K562 (cell line): ENCODE measurements at regions of chr6 and their contacts with region 1.

Region 1: DNA sequence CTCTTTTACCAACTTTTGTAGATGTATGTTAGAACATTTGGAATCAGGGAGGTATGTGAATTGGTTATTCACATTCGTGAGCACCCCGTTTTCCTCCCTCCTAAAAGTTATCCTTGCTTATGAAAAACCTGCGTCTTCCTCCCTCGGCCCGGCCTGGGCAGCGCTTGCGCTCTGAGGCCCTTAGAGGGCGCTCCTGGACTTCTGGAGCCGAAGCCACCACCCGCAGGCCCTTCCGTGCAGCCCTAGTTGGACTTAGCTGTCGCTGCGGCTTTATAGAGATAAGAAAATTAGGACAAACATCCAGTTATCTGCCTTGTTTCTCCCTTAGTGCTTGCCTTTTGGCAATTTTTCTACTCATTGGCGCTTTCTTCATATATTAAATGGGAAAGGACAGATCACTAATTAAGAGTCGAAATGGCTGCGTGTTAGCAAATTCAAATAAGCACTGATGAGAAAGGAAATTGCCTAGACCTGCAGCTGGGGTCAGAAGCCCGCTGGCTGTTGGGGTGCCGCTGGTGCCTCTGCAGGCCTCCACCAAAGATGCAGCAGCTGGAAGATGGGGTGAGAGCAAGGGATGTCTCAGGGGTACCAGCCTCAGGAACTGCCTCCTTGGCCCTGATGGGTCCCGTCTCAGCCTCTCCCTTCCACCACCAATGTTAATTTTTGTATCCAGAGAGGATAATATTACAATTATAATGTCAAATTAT is 5.2 kb downstream of the FNDC1 start:
- DNase-seq: peak; percentile 70 to 82 (median 78)
- ATAC-seq: peak; percentile 100
- H3K4me3 ChIP-seq: no peak overlapping the region
- H3K27ac ChIP-seq: no peak overlapping the region
- H3K4me1 ChIP-seq: peaks cover 0 to 7% of the 10 kb centered on the region in 2 experiments; a peak in 1 of 5 replicates
- H3K27me3 ChIP-seq: peaks cover 29 to 54% of the 10 kb centered on the region in 2 experiments
- CTCF ChIP-seq: peak; percentile 95 to 99 (median 98)
- EP300 ChIP-seq: 0 out of 2 replicates have a peak, but pooled peaks have one; percentile 20
- POLR2A ChIP-seq: no peak
- RAD21 ChIP-seq: peak; percentile 91 to 96

Region 2: GRCh38 chr6:159252955-159253508 is 78.6 kb after region 1 on chr6:
- CTCF ChIA-PET with region 1: no interaction called
- POLR2A ChIA-PET with region 1: no interaction called
- in situ Hi-C with region 1: no loop called
- intact Hi-C with region 1: loop called (anchors 5 kb)
- DNase-seq: peak; percentile 53 to 69 (median 60)
- ATAC-seq: peak; percentile 93
- H3K4me3 ChIP-seq: no peak overlapping the region
- H3K27ac ChIP-seq: no peak overlapping the region
- H3K4me1 ChIP-seq: no peaks in the 10 kb centered on the region
- H3K27me3 ChIP-seq: peaks cover 0 to 9% of the 10 kb centered on the region in 2 experiments; a peak in 3 of 5 replicates
- CTCF ChIP-seq: peak; percentile 53 to 70 (median 66)
- EP300 ChIP-seq: no peak
- POLR2A ChIP-seq: no peak
- RAD21 ChIP-seq: peak in 1 of 2 experiments; percentile 45; a peak in 3 of 4 replicates

Region 3: DNA sequence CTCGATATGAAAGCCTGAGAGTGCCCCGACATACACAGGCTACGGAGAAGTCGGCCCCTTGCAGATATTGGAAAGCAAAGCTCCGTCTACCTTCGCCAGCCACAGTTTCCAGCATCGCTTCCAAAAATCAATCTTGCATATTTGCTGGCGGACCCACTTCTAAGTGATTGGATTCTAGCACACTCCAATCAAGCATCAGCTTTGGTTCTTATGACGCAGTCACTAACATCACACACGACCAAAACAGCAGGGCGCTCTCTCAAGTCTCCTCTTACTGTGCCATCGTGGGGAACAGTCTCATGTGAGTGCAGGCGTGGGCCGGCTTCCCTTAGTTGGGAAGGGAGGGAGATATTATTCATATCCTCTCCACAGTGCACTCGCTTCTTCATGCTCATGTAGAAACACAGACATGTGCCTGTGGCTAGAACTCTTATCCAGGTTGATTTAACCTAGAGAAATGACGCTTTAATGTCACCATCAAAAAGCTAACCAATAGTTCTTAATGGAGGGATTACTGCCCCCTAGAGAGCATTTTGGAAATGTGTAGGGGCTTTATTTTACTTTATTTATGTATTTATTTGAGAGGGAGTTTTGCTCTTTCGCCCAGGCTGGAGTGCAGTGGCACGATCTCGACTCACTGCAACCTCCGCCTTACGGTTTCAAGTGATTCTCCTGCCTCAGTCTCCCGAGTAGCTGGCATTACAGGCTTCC is 288.9 kb after region 1 on chr6:
- CTCF ChIA-PET with region 1: no interaction called
- POLR2A ChIA-PET with region 1: no interaction called
- in situ Hi-C with region 1: no loop called
- intact Hi-C with region 1: loop called (anchors 2 kb)
- DNase-seq: peak in 1 of 4 experiments; percentile 10
- ATAC-seq: peak; percentile 62
- H3K4me3 ChIP-seq: no peak overlapping the region
- H3K27ac ChIP-seq: no peak overlapping the region
- H3K4me1 ChIP-seq: no peaks in the 10 kb centered on the region
- H3K27me3 ChIP-seq: peaks cover 6 to 17% of the 10 kb centered on the region in 2 experiments
- CTCF ChIP-seq: peak; percentile 35 to 57 (median 51); a peak in 4 of 6 replicates
- EP300 ChIP-seq: no peak
- POLR2A ChIP-seq: no peak
- RAD21 ChIP-seq: no peak

Region 4: DNA sequence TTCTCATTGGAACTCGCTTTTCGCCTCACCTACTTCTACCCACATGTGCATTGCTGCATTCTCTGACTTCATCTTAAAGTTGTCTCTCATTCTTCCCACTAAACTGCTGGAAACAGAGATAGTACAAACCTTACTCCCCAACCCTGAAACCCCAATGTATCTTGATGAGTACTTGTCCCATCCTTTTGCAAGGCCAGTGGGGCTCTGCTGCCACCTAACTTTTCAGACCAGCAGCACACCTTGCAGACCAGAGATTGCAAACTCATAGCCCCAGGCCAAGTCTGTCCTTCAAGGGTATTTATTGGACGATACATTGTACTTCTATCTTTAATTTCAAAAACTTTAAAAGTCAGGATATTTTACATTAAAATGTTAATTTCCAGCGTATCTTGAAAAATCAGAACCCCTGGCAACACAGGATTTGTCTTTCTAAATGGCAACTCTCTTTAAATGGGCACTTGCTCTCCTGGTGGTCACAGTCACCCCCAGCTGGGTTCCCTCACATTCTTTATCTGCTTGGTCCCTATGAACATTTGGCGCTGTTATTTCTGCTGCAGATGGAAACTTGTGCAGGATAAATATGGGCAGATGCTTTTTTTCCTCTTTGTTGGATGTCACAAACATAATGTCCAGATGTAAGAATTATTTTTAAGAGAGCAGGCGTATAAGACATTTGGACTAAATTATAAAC is 434.7 kb after region 1 on chr6:
- CTCF ChIA-PET with region 1: interaction called, 6 read pairs
- POLR2A ChIA-PET with region 1: no interaction called
- in situ Hi-C with region 1: no loop called
- intact Hi-C with region 1: loop called (anchors 1 kb)
- DNase-seq: peak; percentile 45 to 64 (median 57)
- ATAC-seq: peak; percentile 98
- H3K4me3 ChIP-seq: no peak overlapping the region
- H3K27ac ChIP-seq: no peak overlapping the region
- H3K4me1 ChIP-seq: no peaks in the 10 kb centered on the region
- H3K27me3 ChIP-seq: peaks cover 0 to 31% of the 10 kb centered on the region in 2 experiments; a peak in 3 of 5 replicates
- CTCF ChIP-seq: peak; percentile 82 to 86 (median 84)
- EP300 ChIP-seq: no peak
- POLR2A ChIP-seq: no peak
- RAD21 ChIP-seq: peak; percentile 51 to 82

Region 5: DNA sequence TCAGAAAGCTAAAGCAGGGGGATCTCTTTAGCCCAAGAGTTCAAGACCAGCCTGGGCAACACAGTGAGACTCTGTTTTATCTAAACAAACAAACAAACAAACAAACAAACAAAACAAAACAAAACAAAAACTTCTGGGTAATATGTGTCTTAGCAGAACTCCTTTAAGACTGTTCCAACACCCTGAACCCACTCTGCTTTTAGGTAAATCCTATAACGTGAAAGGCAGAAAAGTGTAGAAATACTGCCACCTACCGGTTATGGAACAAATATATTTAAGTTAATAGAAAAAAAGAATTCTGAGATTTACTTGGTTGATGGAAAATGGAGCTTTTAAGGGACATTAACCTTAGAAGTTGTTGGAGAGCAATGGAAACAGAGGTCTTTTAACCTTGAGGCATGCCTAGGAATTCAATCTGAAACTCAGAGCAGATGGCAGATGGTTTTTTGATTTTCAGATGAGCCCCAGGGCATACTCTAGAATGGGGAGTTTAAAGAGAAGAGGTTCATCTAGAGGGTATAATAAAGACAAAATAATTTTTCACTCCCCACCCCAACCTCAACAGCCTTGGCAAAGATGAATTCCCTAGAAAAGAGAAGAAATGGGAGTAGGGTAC is 480.2 kb after region 1 on chr6:
- CTCF ChIA-PET with region 1: interaction called, 24 read pairs
- POLR2A ChIA-PET with region 1: no interaction called
- in situ Hi-C with region 1: loop called (anchors 5 kb)
- intact Hi-C with region 1: loop called (anchors 1 kb)
- DNase-seq: peak; percentile 36 to 66 (median 42)
- ATAC-seq: peak; percentile 76
- H3K4me3 ChIP-seq: no peak overlapping the region
- H3K27ac ChIP-seq: no peak overlapping the region
- H3K4me1 ChIP-seq: no peaks in the 10 kb centered on the region
- H3K27me3 ChIP-seq: no peaks in the 10 kb centered on the region
- CTCF ChIP-seq: peak; percentile 52 to 75 (median 62); a peak in 5 of 6 replicates
- EP300 ChIP-seq: no peak
- POLR2A ChIP-seq: no peak
- RAD21 ChIP-seq: peak; percentile 74 to 75